Cardiac septum (tissue), 1 donor: ENCODE measurements at regions of chr22 and their contacts with region 1.

Region 1: DNA sequence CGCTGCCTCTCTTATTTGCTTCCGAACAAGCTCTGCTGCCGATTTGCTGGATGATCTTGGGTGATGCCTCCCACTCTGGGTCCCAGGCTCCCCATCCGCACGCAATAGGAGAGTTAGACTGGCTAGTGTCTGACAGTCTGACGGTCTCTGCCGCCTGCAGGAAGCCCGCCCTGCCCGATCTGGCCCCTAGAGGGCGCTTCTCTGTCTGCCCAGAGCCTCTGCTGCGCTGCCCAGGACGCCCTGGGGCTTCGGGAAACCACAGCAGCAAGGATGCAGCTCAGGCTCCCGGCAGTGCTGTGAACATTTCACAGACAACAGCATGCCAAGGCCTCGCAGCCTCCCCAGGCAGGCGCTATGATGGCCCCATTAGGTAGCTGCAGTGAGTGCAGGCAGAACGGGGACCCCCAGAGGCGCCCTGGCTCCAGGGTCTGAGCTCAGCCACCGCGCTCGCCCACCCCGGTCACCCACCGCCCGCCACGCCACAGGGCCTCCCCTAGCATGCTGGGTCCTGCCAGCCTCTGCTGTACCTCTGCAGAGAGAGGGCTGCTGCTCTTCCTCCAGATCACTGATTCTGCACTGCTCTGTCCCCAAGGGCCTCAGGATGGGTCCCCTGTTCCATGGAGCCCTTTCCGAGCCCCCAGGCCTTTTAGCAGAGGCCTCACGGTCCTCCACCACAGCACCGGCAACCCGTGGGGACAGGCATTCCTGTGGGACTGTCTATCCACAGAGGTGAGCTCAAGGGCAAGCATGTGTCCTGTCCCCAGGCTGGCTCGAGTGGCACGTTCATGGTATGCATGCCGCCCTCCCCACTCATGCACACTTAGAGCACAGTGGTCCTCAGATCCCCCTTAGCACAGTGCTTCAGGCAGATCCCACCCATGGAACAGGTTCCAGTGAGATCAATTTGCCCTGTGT is 4.3 kb upstream of the BAIAP2L2 start:
- DNase-seq: peak; percentile 93

Region 2: GRCh38 chr22:37862570-37863325 is 252.0 kb before region 1 on chr22:
- intact Hi-C with region 1: no loop called
- DNase-seq: no peak

Region 3: GRCh38 chr22:38080850-38081635 is 33.7 kb before region 1 on chr22:
- intact Hi-C with region 1: no loop called
- DNase-seq: no peak

Region 4: DNA sequence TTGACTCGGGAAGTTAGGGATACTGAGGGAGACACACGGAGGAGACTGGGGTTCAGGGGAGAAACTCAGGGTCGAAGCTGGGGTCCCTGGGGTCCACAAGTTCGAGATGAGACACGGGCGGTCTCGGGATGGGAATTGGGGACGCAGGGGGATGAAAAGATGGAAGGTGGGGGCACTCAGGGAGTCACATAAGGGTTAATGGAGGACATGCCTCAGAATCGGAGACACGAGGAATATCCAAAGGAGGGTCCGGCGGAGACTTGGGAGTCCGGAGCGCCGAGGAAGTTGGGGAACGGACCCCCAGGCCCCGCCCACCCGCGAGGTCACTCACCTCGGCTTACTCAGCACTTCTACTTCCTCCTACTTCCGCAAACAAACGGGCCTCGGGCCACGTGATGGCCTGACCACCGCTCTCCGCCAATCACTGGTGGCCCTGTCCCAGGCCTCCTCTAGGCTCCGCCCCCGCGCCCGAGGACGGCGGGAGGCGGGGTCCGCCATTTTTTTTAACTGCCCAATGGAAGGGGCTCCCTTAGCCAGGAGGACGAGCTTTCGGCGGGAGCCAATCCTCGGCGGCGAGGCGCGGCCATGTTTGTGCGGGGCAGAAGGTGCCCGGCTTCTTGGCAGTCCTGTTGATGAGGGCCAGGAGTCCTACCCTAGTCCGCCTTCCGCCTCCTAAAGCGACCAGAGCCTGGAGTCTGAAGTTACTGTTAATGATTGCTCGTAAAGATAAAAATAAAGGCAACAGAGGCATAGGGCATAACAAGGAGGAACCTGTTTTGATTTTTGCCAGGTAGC is 66.9 kb after region 1 on chr22 and contains the start of gene PLA2G6:
- intact Hi-C with region 1: no loop called
- DNase-seq: peak; percentile 99
- total RNA-seq, gene PLA2G6: 12.5 TPM

Region 5: DNA sequence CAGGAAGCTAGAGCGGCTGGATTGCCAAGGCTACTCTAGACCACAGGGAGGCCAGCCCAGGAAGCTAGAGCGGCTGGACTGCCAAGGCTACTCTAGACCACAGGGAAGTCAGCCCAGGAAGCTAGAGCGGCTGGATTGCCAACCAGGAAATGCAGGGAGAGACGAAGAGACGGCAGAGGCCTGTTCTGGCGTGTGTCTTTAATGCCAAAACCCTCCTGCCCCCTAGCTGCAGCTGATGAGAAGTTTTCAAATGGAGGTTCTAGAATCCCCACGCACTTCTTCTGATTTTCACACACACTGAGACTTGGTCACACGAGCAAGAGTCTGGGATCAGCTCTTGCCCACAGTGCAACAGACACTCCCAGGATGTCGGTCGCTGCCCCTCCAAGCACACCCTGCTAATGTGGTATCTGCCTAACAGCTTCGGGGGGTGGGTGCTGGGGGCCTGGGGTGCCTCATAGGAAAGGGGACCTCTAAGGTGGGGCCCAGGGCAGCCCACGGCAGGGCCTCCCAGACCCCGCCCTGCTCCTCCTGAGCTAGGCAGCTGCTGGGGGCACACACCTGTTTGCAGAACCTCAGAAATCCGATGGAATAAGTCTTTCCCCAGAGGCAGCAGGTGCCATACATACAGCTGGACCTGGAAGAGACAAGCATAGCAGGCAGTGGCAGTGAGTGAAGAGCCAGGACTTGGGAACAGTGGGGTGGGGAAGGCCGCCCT is 115.5 kb after region 1 on chr22:
- intact Hi-C with region 1: loop called (anchors 10 kb)
- DNase-seq: no peak

Region 6: GRCh38 chr22:38327805-38328204 is 213.1 kb after region 1 on chr22:
- intact Hi-C with region 1: loop called (anchors 10 kb)
- DNase-seq: no peak

Region 7: DNA sequence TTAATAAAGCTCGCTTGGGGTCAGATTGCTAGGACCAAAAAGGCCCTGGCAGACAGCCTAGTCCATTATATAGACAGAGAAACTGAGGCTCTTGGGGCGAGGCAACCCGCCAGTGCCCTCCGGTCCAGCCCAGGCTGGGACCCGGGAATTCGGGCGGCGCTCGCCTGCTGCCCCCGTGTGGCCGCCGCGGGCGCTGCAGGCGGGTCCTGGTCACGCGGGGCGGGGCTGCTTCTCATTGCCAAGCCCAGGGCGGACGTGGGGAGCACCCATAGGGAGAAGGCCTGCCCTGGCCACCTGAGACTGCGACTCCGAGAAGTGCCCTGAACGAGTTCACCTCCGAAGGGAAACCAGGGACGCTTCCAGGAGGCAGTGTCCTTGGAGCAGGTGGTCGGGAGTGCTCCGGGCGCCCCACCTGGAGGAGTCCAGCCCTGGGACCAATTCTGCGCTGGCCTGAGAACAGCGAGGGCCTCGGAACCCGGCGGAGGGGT is 238.4 kb after region 1 on chr22:
- intact Hi-C with region 1: loop called (anchors 2 kb)
- DNase-seq: peak; percentile 90